IMR-90 (cell line): ENCODE measurements at regions of chr6 and their contacts with region 1.

Region 1: DNA sequence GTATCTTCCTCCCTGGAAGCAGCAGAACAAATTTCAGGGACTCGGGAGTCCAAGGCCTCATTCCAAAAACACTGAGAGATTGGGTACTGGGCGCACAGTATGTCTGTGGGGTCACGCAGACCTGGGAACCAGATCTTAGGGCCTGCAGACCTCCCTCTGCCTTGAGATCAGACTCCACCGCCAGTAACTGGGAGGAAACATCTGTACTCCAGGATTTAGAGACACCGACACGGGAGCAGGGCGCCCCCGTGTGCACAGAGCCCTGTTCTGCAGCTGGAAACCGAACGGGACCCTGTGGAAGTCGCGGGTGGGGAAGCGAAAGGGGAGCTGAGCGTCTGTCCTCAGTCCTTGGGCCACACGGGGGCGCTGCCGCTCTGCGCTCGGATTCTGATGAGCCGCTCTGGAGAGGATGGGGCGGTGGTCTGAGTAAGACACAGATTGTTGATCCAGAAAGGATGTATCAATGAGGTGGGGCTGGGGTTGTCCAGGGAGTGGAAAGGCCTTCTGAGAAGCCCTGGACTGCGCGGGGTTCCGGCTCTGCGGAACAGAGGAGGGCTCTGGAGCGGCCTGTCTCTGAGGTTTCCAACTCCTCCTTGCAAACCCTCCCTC is 35.7 kb upstream of the HLA-E start:
- DNase-seq: peak; percentile 82
- ATAC-seq: peak; percentile 97
- H3K4me3 ChIP-seq: no peak overlapping the region
- H3K27ac ChIP-seq: no peak overlapping the region
- H3K4me1 ChIP-seq: peaks cover 2% of the 10 kb centered on the region; the same call in 1 of the 2 replicates
- H3K27me3 ChIP-seq: peaks cover 76% of the 10 kb centered on the region
- CTCF ChIP-seq: peak; percentile 94
- POLR2A ChIP-seq: no peak
- RAD21 ChIP-seq: peak; percentile 67

Region 2: DNA sequence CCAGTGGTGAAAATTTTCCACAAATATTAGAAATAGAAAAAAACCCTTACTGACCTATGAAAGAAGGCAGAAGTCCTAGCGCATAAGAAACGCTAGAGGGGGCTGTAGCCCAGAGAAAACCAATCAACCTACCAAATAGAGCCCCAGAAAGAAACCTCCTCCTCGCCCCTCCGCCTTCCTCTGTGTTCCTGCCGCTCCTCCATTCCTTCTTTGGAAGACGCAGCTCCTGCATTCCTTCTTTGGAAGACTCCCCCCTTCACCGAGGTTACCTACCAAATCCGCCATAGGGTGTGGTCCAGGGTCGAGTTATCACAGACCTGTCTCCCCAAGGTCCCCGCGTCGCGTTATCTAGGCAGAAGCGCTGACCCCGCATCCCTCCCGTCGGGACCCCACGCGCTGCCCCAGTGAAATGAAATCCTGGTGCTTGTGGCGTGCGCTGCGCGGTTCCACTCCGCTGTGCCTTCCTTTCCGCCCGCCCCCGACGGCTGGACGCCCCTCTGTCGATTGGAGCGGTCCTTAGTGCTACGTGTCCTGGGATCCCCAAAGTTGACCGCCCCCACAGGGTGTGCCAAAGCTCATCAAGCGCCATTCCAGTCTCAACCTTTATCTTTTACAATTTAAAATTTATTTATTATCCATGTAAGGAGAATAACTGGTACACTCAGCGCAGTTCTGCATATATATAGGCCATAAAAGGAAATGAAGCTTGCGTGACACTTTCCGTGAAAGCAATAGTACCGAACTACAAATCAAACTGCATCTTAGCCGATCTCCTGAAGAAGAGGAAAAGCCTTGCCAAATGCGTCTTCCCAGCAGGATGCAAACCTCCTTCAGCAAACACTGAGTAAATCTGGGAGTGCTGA is 95.7 kb before region 1 on chr6:
- CTCF ChIA-PET with region 1: no interaction called
- POLR2A ChIA-PET with region 1: no interaction called
- dilution Hi-C with region 1: no loop called
- in situ Hi-C with region 1: no loop called
- intact Hi-C with region 1: loop called (anchors 2 kb)
- DNase-seq: peak; percentile 74
- ATAC-seq: peak; percentile 96
- H3K4me3 ChIP-seq: peak overlapping the region; percentile 38
- H3K27ac ChIP-seq: no peak overlapping the region
- H3K4me1 ChIP-seq: no peaks in the 10 kb centered on the region
- H3K27me3 ChIP-seq: peaks cover 53% of the 10 kb centered on the region
- CTCF ChIP-seq: peak; percentile 79
- POLR2A ChIP-seq: no peak
- RAD21 ChIP-seq: peak; percentile 63

Region 3: GRCh38 chr6:30411515-30412207 is 42.0 kb before region 1 on chr6:
- CTCF ChIA-PET with region 1: interaction called, 5 read pairs
- POLR2A ChIA-PET with region 1: no interaction called
- dilution Hi-C with region 1: no loop called
- in situ Hi-C with region 1: no loop called
- intact Hi-C with region 1: loop called (anchors 2 kb)
- DNase-seq: peak; percentile 36
- ATAC-seq: peak; percentile 90
- H3K4me3 ChIP-seq: no peak overlapping the region
- H3K27ac ChIP-seq: no peak overlapping the region
- H3K4me1 ChIP-seq: no peaks in the 10 kb centered on the region
- H3K27me3 ChIP-seq: peaks cover 30% of the 10 kb centered on the region
- CTCF ChIP-seq: peak; percentile 67
- POLR2A ChIP-seq: no peak
- RAD21 ChIP-seq: peak; percentile 50

Region 4: GRCh38 chr6:30463651-30464618 is 10.3 kb after region 1 on chr6:
- CTCF ChIA-PET with region 1: interaction called, 10 read pairs
- POLR2A ChIA-PET with region 1: no interaction called
- dilution Hi-C with region 1: no loop called
- in situ Hi-C with region 1: no loop called
- intact Hi-C with region 1: no loop called
- DNase-seq: peak; percentile 50
- ATAC-seq: peak; percentile 72
- H3K4me3 ChIP-seq: no peak overlapping the region
- H3K27ac ChIP-seq: no peak overlapping the region
- H3K4me1 ChIP-seq: peaks cover 3% of the 10 kb centered on the region
- H3K27me3 ChIP-seq: peaks cover 81% of the 10 kb centered on the region
- CTCF ChIP-seq: no peak
- POLR2A ChIP-seq: no peak
- RAD21 ChIP-seq: no peak

Region 5: GRCh38 chr6:30707281-30707872 is 253.8 kb after region 1 on chr6:
- CTCF ChIA-PET with region 1: no interaction called
- POLR2A ChIA-PET with region 1: interaction called, 19 read pairs
- dilution Hi-C with region 1: no loop called
- in situ Hi-C with region 1: no loop called
- intact Hi-C with region 1: no loop called
- DNase-seq: no peak
- ATAC-seq: no peak
- H3K4me3 ChIP-seq: no peak overlapping the region
- H3K27ac ChIP-seq: no peak overlapping the region
- H3K4me1 ChIP-seq: no peaks in the 10 kb centered on the region
- H3K27me3 ChIP-seq: no peaks in the 10 kb centered on the region
- CTCF ChIP-seq: no peak
- POLR2A ChIP-seq: no peak
- RAD21 ChIP-seq: no peak